Thyroid gland (tissue), 4 donors: ENCODE measurements at regions of chr14 and their contacts with region 1.

Region 1: GRCh38 chr14:23379366-23380196 is 2.7 kb downstream of the CMTM5 start:
- DNase-seq: peak; percentile 78 to 83
- H3K4me3 ChIP-seq: no peak overlapping the region
- H3K27ac ChIP-seq: no peak overlapping the region
- H3K4me1 ChIP-seq: no peaks in the 10 kb centered on the region
- H3K27me3 ChIP-seq: no peaks in the 10 kb centered on the region
- CTCF ChIP-seq: peak; percentile 74 to 97 (median 90)
- POLR2A ChIP-seq: no peak

Region 2: DNA sequence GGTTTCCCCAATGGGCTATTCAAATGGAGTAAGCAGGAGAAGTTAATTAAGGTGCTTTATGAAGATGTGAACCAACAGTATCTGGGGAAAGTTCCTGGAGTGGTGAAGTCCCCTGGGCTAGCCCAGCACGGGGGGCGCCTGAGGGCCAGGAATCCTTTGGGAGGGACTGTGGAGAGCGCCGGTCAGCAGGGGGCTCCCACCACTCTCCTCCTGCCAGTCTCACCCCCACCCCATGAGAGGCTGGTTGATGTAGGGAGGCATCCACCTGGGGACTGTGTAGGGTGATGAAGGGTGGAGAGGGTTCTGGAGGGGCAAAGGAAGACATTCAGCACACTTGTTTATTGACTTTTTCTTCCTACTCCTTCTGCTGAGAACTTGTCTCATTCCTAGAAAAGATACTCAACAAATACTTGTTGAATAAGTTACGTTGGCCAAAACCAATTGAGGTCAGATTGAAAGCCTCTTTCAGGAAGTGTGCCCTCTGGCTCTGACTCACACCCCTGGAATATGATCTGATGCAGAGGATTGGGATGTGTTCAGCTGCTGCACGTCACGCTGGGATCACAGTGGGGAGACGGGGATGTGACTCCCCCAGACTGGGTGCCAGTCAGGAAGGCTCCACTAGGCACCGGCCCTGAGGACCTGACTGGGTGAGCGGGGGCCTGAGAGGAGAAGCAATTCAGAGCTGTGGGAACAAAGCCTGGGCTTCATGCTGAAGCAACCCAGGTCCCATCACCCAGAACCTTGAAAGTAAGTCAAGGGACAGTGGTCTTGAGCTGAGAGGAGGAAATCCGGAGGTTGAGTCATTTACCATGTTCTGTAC is 264.7 kb before region 1 on chr14:
- intact Hi-C with region 1: loop called (anchors 10 kb)
- DNase-seq: no peak
- H3K4me3 ChIP-seq: no peak overlapping the region
- H3K27ac ChIP-seq: peak overlapping the region in 1 of 3 donors; percentile 52
- H3K4me1 ChIP-seq: peaks cover 6 to 30% of the 10 kb centered on the region in 2 donors
- H3K27me3 ChIP-seq: no peaks in the 10 kb centered on the region
- CTCF ChIP-seq: no peak
- POLR2A ChIP-seq: no peak

Region 3: DNA sequence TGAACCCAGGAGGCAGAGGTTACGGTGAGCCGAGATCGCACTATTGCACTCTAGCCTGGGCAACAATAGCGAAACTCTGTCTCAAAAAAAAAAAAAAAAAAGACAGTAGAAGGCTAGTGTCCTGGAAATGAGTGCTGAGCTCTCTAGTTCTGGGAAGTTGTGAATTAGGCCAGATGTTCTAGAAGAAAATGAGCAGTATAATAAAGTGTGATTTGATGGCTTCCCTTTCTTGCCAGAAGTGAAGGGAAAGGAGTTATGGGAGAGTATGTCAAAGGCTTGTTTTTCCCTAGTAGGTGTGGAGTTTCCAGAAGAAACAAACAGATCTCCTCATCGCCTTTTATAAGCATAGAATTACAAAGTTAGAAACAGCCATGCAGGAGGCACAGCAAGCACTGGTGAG is 121.3 kb before region 1 on chr14:
- intact Hi-C with region 1: loop called (anchors 5 kb)
- DNase-seq: no peak
- H3K4me3 ChIP-seq: no peak overlapping the region
- H3K27ac ChIP-seq: no peak overlapping the region
- H3K4me1 ChIP-seq: peaks cover 0 to 4% of the 10 kb centered on the region in 2 donors
- H3K27me3 ChIP-seq: no peaks in the 10 kb centered on the region
- CTCF ChIP-seq: no peak
- POLR2A ChIP-seq: no peak

Region 4: DNA sequence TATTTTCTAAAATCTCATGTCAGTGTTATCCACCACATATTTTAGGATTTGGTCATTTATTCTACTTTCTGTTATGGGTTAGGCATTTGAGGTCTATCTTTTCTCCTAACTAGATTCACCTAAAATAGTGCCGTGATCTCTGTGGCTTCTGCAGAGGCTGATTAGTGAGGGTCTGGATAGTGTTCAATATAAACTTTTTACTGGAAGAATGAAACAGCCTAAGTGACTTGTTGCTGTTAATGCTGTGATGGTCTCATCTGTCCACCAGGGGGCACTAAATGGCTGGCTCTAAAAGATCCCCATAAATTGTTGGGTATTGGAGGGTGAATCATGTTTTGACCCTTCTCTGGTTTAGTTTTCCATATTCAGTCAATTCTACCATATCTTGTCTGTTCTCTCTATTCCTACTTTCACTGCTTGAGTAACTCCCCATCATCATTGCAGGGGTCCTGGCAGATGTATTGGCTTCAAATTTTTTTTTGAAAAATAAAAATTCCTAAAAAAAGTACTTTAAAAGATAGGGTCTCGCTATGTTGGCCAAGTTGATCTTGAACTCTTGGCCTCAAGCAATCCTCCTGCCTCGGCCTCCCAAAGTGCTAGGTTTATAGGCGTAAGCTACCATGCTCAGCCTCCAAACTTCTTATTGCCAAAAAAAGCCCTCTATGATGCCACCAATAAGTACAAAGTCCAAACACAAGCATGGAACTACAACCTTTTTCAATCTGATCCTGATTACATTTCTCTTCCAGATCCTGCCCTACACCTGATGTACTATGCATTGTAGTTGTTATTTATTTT is 51.4 kb before region 1 on chr14:
- intact Hi-C with region 1: loop called (anchors 2 kb)
- DNase-seq: peak; percentile 71 to 76
- H3K4me3 ChIP-seq: no peak overlapping the region
- H3K27ac ChIP-seq: no peak overlapping the region
- H3K4me1 ChIP-seq: peaks cover 2 to 6% of the 10 kb centered on the region in 2 donors
- H3K27me3 ChIP-seq: no peaks in the 10 kb centered on the region
- CTCF ChIP-seq: peak; percentile 63 to 81 (median 78)
- POLR2A ChIP-seq: no peak

Region 5: DNA sequence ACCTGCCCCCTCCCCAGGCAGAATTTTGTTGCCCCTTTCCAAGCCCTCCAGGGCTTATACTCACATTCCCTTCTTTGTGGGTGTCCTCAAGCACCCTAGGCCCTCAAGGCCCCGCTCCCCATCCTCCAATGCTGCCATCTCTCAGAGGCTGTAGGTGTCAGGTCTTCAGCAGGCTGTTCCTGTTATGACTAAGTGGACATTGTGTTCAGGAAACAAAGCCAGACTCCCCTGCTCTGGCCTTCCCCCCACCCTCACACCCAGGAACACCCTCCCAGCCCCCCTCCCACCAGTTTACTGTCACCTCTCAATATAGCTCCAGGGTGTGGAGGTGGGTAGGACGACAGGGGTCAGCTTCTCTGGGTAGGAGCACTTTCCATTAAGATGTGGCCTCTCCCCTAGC is 29.9 kb after region 1 on chr14:
- intact Hi-C with region 1: no loop called
- DNase-seq: no peak
- H3K4me3 ChIP-seq: no peak overlapping the region
- H3K27ac ChIP-seq: no peak overlapping the region
- H3K4me1 ChIP-seq: no peaks in the 10 kb centered on the region
- H3K27me3 ChIP-seq: no peaks in the 10 kb centered on the region
- CTCF ChIP-seq: no peak
- POLR2A ChIP-seq: no peak